PC-9 (cell line): ENCODE measurements at regions of chr15 and their contacts with region 1.

Region 1: DNA sequence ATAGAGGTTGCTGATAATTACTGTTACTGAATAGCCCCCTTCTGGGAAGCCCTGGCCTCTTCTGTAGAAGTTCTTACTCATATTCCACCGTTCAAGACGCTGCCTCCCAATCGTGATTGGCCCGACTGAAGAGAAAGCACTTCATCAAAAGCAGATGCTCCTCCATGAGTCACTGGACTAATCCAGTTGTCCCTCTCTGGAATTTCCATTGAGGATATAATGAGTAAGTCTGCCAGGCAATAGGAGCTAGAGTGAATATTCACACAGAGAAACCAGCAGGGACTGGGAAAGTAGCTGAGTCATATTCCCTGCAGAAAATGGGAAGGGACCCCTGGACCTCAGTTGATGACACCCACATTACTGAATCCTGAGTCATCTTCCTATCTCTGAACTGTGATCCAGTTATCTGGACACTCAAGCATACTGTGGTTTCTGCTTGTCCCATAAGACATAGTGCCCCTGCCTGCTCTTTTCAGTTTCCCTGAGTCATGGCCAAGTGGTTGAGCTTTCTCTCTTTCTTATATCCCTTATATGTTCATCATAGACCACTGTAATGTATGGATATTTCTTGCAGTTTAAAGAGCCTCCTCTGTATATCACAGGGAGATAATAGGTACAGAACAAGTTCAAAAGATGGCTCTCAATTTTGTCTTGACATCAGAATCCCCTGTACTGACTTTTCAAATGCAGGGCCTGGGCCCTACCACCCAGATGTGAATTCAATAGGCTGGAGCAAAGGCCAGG is 151.2 kb upstream of the CDIN1 start:
- DNase-seq: peak; percentile 66 to 90
- H3K4me3 ChIP-seq: no peak overlapping the region
- H3K27ac ChIP-seq: peak overlapping the region; percentile 95
- H3K4me1 ChIP-seq: peaks cover 22% of the 10 kb centered on the region
- H3K27me3 ChIP-seq: no peaks in the 10 kb centered on the region
- CTCF ChIP-seq: no peak

Region 2: DNA sequence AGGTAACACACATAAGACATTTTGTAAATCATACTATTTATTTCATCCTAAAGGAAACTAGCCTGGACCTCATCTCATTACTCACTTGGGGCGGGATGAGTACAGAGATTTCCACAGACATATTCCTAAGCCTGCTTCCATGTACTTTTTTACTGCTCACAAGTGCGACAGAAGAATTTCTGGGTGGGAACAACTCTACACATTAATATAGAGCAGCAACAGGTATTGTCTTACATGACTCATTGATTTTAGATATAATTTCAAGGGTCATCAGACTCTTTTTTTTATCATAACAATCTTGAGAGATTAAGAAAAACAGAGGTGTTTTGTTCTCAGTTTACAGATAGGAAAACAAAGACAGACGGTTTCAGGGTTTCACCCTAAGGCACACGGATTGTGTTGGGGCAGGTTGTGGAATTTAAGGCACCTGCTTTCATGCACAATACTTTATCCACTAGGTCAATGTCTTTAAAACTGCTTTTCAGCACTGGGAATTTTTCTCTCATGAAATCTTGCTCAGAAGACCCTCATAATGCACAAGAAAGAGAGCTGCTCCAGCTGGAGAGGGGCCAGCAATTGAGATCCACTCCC is 35.5 kb before region 1 on chr15:
- CTCF ChIA-PET with region 1: no interaction called
- POLR2A ChIA-PET with region 1: no interaction called
- intact Hi-C with region 1: loop called (anchors 2 kb)
- DNase-seq: peak; percentile 31 to 74
- H3K4me3 ChIP-seq: no peak overlapping the region
- H3K27ac ChIP-seq: peak overlapping the region; percentile 49
- H3K4me1 ChIP-seq: peaks cover 17% of the 10 kb centered on the region
- H3K27me3 ChIP-seq: no peaks in the 10 kb centered on the region
- CTCF ChIP-seq: no peak